Transverse colon (tissue), 4 donors: ENCODE measurements at regions of chr7 and their contacts with region 1.

Region 1: DNA sequence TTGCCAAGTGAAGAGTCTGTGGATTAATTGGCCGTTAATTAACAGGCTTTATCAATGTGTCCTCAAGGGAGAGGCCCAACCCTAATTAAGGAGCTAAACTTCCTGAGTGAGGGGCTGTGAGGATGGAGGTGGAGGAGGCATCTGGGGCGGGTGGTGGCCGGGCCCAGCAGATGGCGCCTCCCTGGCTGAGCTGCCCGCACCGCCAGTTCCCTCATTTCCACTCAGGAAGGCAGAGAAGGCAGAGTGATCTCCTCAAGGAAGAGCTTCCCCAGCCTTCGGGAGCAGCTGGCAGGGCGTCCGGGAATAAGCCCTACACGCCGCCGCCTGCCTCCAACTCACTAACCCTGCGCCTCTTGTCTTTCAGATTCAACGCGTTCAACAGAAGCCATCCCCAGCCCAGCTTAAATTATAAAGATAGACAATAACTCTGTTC is 112.2 kb downstream of the CYTH3 start:
- DNase-seq: peak; percentile 44
- H3K4me3 ChIP-seq: no peak overlapping the region
- H3K27ac ChIP-seq: peak overlapping the region in 3 of 4 donors; percentile 18 to 65 (median 34)
- H3K4me1 ChIP-seq: peaks cover 0 to 9% (median 1%) of the 10 kb centered on the region in 4 donors
- H3K27me3 ChIP-seq: no peaks in the 10 kb centered on the region
- CTCF ChIP-seq: peak; percentile 54 to 69 (median 55)
- EP300 ChIP-seq: no peak
- POLR2A ChIP-seq: no peak

Region 2: DNA sequence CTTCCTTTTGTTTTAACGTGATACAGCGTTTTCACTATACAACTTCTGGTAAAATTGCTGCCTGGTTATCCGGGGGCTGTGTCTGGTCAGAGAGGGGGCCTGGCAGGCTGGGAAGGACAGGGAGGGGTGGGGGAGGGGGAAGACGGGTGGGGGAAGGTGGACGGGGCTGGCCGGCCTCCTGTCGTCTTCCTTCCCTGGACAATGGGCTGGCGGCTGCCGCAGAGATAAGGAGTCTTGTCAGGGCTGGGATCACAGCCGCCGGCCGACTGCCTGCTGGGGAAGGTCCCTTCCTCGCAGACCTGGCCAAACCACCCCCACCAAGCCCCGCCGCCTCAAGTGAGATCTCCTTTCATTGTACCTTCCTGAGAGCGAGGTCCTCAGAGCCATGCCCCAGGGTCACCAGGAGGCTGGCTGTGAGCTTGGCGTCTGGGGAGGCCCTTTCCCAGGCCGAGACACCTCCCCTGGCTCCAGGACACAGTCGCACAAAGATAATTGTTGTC is 585.4 kb before region 1 on chr7:
- in situ Hi-C with region 1: no loop called
- intact Hi-C with region 1: no loop called
- DNase-seq: no peak
- H3K4me3 ChIP-seq: no peak overlapping the region
- H3K27ac ChIP-seq: peak overlapping the region; percentile 27 to 57 (median 42)
- H3K4me1 ChIP-seq: peaks cover 0 to 21% (median 12%) of the 10 kb centered on the region in 4 donors
- H3K27me3 ChIP-seq: peaks cover 38% of the 10 kb centered on the region
- CTCF ChIP-seq: no peak
- EP300 ChIP-seq: no peak
- POLR2A ChIP-seq: no peak

Region 3: GRCh38 chr7:6130007-6130587 is 30.1 kb before region 1 on chr7:
- in situ Hi-C with region 1: no loop called
- intact Hi-C with region 1: no loop called
- DNase-seq: no peak
- H3K4me3 ChIP-seq: no peak overlapping the region
- H3K27ac ChIP-seq: no peak overlapping the region
- H3K4me1 ChIP-seq: no peaks in the 10 kb centered on the region
- H3K27me3 ChIP-seq: no peaks in the 10 kb centered on the region
- CTCF ChIP-seq: no peak
- EP300 ChIP-seq: no peak
- POLR2A ChIP-seq: no peak

Region 4: GRCh38 chr7:6272481-6273323 is 112.5 kb after region 1 on chr7 and contains the start of gene CYTH3:
- in situ Hi-C with region 1: no loop called
- intact Hi-C with region 1: loop called (anchors 5 kb)
- DNase-seq: peak; percentile 87
- H3K4me3 ChIP-seq: peak within 1 kb of the TSS; percentile 68 to 99 (median 96)
- H3K27ac ChIP-seq: peak within 1 kb of the TSS; percentile 80 to 87 (median 83)
- H3K4me1 ChIP-seq: peaks cover 0 to 42% (median 28%) of the 10 kb centered on the region in 4 donors
- H3K27me3 ChIP-seq: no peaks in the 10 kb centered on the region
- CTCF ChIP-seq: peak in 1 of 5 experiments; percentile 10
- EP300 ChIP-seq: no peak
- POLR2A ChIP-seq: no peak
- total RNA-seq, gene CYTH3: 15.0 to 25.4 (median 19.4) TPM

Region 5: DNA sequence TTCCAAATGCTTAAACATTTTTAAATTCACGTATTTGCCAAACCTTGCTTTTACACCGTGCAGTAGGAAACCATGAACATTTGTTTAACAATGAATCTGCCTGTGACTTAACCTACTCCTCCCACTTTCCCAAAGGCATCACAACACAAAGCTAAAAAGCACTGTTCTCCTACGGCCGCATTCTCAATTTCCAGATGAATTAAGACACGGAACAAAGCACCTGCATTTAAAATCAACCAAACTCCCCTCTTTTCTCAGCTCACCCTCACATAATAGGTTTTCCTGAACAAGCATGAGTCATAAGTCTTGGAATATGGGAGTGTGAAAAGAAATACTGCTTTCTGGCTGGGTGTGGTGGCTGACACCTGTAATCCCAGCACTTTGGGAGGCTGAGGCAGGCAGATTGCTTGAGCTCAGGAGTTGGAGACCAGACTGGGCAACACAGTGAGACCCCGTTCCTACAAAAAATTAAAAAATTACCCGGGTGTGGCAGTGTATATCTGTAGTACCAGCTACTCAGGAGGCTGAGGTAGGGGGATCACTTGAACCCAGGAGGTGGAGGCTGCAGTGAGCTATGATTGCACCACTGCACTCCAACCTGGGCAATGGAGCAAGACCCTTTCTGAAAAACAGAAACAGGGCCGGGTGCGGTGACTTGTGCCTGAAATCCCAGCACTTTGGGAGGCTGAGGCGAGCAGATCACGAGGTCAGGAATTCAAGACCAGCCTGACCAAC is 163.9 kb after region 1 on chr7:
- in situ Hi-C with region 1: loop called in 2 of 4 experiments (anchors 10 kb)
- intact Hi-C with region 1: loop called (anchors 2 kb)
- DNase-seq: no peak
- H3K4me3 ChIP-seq: no peak overlapping the region
- H3K27ac ChIP-seq: no peak overlapping the region
- H3K4me1 ChIP-seq: peaks cover 0 to 3% (median 1%) of the 10 kb centered on the region in 4 donors
- H3K27me3 ChIP-seq: no peaks in the 10 kb centered on the region
- CTCF ChIP-seq: no peak
- EP300 ChIP-seq: no peak
- POLR2A ChIP-seq: no peak

Region 6: GRCh38 chr7:6496842-6497636 is 336.8 kb after region 1 on chr7:
- in situ Hi-C with region 1: no loop called
- intact Hi-C with region 1: no loop called
- DNase-seq: no peak
- H3K4me3 ChIP-seq: no peak overlapping the region
- H3K27ac ChIP-seq: no peak overlapping the region
- H3K4me1 ChIP-seq: no peaks in the 10 kb centered on the region
- H3K27me3 ChIP-seq: no peaks in the 10 kb centered on the region
- CTCF ChIP-seq: no peak
- EP300 ChIP-seq: no peak
- POLR2A ChIP-seq: no peak